Calu3 (cell line): ENCODE measurements at regions of chr11 and their contacts with region 1.

Region 1: GRCh38 chr11:47348859-47349258 is 3.6 kb downstream of the MYBPC3 start:
- DNase-seq: peak; percentile 12
- H3K4me3 Mint-ChIP-seq: no peak overlapping the region
- H3K27ac Mint-ChIP-seq: no peak overlapping the region
- H3K4me1 Mint-ChIP-seq: no peaks in the 10 kb centered on the region
- H3K27me3 Mint-ChIP-seq: peaks cover 49% of the 10 kb centered on the region
- CTCF ChIP-seq: no peak

Region 2: DNA sequence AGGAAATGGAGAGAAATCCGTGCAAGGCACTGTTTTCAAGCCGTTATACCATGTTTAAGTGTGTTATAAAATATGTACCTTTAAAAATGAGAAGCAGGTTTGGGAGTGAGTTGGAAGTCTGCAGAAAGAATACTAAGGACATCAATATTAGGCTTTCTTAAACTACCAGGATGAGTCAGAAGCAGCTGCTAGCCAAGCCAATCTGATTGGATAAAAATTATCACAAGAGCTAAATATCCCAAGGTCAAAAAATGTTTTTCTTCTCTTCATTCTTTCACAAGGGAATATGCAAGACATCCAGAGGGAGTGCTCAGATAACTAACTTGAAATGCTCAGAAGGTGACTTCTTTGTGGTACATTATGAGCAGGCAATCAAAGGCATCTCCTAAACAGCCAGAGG is 483.5 kb before region 1 on chr11:
- CTCF ChIA-PET with region 1: interaction called, 10 read pairs
- intact Hi-C with region 1: no loop called
- DNase-seq: no peak
- H3K4me3 Mint-ChIP-seq: no peak overlapping the region
- H3K27ac Mint-ChIP-seq: no peak overlapping the region
- H3K4me1 Mint-ChIP-seq: no peaks in the 10 kb centered on the region
- H3K27me3 Mint-ChIP-seq: peaks cover 22% of the 10 kb centered on the region
- CTCF ChIP-seq: no peak

Region 3: GRCh38 chr11:47269829-47270305 is 79.0 kb before region 1 on chr11 and contains the start of gene MADD:
- CTCF ChIA-PET with region 1: no interaction called
- intact Hi-C with region 1: loop called (anchors 5 kb)
- DNase-seq: peak; percentile 88
- H3K4me3 Mint-ChIP-seq: peak within 1 kb of the TSS; percentile 59
- H3K27ac Mint-ChIP-seq: peak within 1 kb of the TSS; percentile 95
- H3K4me1 Mint-ChIP-seq: peaks cover 33% of the 10 kb centered on the region
- H3K27me3 Mint-ChIP-seq: no peaks in the 10 kb centered on the region
- CTCF ChIP-seq: no peak
- total RNA-seq, gene MADD: 42.9 and 45.7 TPM in 2 replicates